OCI-LY7 (cell line): ENCODE measurements at regions of chr2 and their contacts with region 1.

Region 1: DNA sequence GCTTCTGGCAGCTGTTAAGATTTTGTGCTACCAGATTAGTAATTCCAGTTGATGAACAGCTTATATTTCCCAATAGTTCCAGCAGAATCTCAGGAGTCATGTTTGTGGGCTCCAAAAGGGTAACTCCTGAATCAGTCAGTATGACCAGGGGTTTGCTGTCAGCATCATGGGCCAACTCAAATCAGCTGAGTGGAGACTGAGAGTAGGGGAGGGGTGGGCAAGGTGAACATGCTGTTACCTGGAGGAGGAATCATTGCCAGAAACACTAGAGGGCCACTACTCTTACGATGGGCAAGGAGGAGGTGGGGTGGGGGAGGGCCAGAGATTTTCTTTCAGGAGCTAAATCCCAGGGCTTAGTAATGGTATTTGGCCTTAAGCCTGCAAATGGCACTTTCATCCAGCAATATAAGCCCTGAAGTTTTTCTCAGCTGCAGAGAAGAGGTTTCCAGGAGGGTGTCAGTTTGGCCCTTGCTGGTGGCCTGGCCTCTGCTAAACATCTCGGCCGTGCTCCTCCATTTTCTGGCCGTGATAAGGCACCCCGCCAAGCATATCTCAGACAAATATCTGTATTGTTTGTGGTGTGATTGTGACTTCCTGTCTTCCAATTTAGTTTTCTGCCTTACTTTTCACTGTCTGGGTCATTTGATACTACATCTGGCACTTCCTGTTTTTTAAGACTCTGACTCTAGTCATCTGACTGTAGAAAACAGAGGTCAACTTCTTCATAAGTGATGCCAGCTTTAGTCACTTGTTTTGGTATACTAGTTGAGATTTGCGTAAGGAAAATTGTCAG is 120.5 kb upstream of the CXCR4 start:
- DNase-seq: peak; percentile 97
- H3K4me3 ChIP-seq: peak overlapping the region; percentile 54
- H3K27ac ChIP-seq: peak overlapping the region; percentile 100
- H3K4me1 ChIP-seq: peaks cover 88% of the 10 kb centered on the region
- CTCF ChIP-seq: peak; percentile 21; the same call in 1 of the 2 replicates

Region 2: DNA sequence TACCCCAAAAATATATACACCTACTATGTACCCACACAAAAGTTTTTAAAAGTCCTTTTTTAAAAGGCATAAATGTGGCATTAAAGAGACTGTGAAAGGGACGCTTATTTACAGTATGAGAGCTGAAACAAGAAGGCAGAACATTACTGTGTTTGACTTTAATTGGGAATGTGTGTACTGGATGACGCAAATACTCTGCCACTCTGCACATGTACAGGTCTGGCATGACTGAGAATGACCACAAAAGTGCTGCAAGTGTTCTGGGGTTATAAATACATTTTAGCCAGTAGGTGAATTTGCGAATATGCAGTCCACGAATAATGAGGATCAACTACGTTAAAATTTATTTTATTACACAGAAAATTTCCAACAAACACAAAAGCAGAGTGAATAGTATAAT is 264.4 kb before region 1 on chr2:
- CTCF ChIA-PET with region 1: no interaction called
- POLR2A ChIA-PET with region 1: no interaction called
- intact Hi-C with region 1: no loop called
- DNase-seq: no peak
- H3K4me3 ChIP-seq: peak overlapping the region; percentile 37
- H3K27ac ChIP-seq: peak overlapping the region; percentile 71
- H3K4me1 ChIP-seq: peaks cover 59% of the 10 kb centered on the region
- CTCF ChIP-seq: no peak

Region 3: DNA sequence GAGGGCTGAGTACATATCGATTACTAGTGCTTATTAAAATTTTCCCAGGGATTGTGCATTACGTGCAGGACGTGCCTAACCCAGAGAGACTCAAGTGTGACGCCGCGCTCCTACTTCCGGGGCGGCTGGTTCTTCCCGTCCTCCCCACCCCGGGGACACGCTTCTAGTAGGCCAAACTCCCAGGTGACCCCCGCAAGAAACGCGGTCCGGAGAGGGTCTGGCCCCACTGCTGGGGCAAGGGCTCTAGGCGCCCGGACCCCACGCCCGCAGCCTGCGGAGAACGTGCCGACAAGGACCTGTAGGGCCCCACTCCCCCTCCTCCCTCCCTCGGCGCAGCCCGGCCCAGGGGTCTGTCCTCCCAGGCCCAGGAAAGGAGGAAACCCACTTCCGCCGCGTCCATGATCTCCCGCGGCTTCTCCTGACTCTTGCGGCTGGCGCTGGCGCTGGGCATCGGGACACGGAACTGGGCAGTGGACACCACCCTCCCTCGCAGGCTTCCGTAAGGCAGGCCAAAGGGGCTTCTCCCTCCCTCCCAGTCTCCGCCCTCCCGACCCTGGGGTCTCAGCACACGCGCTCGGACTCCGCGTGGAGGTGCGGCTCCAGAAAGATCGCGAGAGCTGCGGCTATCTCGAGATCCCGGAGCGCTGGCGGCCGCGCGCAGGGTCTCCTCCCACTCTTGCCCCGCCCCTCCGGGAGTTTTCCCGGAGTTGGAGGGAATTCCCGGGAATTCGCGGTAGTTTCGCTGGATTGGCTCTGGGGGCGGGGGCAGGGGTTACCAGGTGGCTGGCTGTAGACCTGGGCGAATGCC is 253.3 kb before region 1 on chr2 and contains the start of gene DARS1:
- CTCF ChIA-PET with region 1: no interaction called
- POLR2A ChIA-PET with region 1: interaction called, 15 read pairs
- intact Hi-C with region 1: no loop called
- DNase-seq: peak; percentile 93
- H3K4me3 ChIP-seq: peak within 1 kb of the TSS; percentile 85
- H3K27ac ChIP-seq: peak within 1 kb of the TSS; percentile 79
- H3K4me1 ChIP-seq: peaks cover 49% of the 10 kb centered on the region
- CTCF ChIP-seq: no peak
- total RNA-seq, gene DARS1: 90.5 and 108 TPM in 2 replicates

Region 4: GRCh38 chr2:136025057-136025973 is 213.2 kb before region 1 on chr2:
- CTCF ChIA-PET with region 1: no interaction called
- POLR2A ChIA-PET with region 1: no interaction called
- intact Hi-C with region 1: no loop called
- DNase-seq: peak; percentile 56
- H3K4me3 ChIP-seq: no peak overlapping the region
- H3K27ac ChIP-seq: no peak overlapping the region
- H3K4me1 ChIP-seq: peaks cover 22% of the 10 kb centered on the region
- CTCF ChIP-seq: no peak

Region 5: GRCh38 chr2:136112317-136113208 is 125.9 kb before region 1 on chr2:
- CTCF ChIA-PET with region 1: no interaction called
- POLR2A ChIA-PET with region 1: interaction called, 15 read pairs
- intact Hi-C with region 1: loop called (anchors 1 kb)
- DNase-seq: no peak
- H3K4me3 ChIP-seq: peak overlapping the region; percentile 92
- H3K27ac ChIP-seq: peak overlapping the region; percentile 92
- H3K4me1 ChIP-seq: peaks cover 84% of the 10 kb centered on the region
- CTCF ChIP-seq: no peak

Region 6: GRCh38 chr2:136207030-136207623 is 31.4 kb before region 1 on chr2:
- CTCF ChIA-PET with region 1: interaction called, 15 read pairs
- POLR2A ChIA-PET with region 1: interaction called, 115 read pairs
- intact Hi-C with region 1: loop called (anchors 1 kb)
- DNase-seq: peak; percentile 96
- H3K4me3 ChIP-seq: peak overlapping the region; percentile 58
- H3K27ac ChIP-seq: peak overlapping the region; percentile 97
- H3K4me1 ChIP-seq: peaks cover 66% of the 10 kb centered on the region
- CTCF ChIP-seq: peak; percentile 11; the same call in 1 of the 2 replicates

Region 7: GRCh38 chr2:136255648-136256463 is 17.4 kb after region 1 on chr2:
- CTCF ChIA-PET with region 1: interaction called, 12 read pairs
- POLR2A ChIA-PET with region 1: interaction called, 99 read pairs
- intact Hi-C with region 1: loop called (anchors 1 kb)
- DNase-seq: peak; percentile 85
- H3K4me3 ChIP-seq: peak overlapping the region; percentile 26
- H3K27ac ChIP-seq: peak overlapping the region; percentile 79
- H3K4me1 ChIP-seq: peaks cover 72% of the 10 kb centered on the region
- CTCF ChIP-seq: peak; percentile 80

Region 8: DNA sequence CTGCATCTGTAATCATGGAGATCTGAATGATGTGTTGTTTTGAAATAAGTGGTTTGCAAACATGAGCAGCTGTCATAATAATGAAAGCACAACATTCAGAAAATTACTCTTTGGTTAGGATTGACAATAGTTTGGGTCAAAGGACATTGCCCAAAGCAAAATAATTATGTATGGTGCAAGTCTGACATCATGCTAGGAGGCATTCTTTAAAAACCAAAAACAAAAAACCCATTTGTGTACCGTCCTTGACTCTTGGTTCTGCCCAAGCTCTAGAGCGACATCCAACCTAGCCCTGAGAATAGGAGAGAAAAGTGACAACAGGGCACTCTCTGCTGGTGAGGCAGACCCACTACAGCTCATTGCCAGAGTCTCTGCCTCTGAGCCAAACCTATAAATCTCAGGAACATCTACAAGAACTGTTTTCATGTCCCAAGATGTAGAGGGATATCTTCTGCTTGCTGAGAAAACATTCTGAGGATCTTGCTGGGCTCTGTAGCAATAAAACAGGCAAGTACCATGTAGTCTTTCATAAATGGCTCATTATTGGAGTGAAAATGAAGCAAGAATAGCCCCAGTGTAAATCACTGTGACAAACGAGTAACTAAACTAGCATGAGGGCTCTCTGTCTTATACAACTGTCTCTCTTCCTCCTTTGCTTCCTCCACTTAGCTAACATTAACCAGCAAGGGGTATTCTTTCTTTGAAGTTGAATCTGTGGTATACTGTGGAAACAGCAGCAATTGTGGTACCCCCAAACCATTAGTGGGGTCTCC is 146.2 kb after region 1 on chr2:
- CTCF ChIA-PET with region 1: interaction called, 4 read pairs
- POLR2A ChIA-PET with region 1: interaction called, 17 read pairs
- intact Hi-C with region 1: no loop called
- DNase-seq: peak; percentile 87
- H3K4me3 ChIP-seq: peak overlapping the region; percentile 19
- H3K27ac ChIP-seq: peak overlapping the region; percentile 93
- H3K4me1 ChIP-seq: peaks cover 87% of the 10 kb centered on the region
- CTCF ChIP-seq: peak; percentile 99